Naive thymus-derived CD8-positive, alpha-beta T cell (primary cell): ENCODE measurements at regions of chr5 and their contacts with region 1.

Region 1: DNA sequence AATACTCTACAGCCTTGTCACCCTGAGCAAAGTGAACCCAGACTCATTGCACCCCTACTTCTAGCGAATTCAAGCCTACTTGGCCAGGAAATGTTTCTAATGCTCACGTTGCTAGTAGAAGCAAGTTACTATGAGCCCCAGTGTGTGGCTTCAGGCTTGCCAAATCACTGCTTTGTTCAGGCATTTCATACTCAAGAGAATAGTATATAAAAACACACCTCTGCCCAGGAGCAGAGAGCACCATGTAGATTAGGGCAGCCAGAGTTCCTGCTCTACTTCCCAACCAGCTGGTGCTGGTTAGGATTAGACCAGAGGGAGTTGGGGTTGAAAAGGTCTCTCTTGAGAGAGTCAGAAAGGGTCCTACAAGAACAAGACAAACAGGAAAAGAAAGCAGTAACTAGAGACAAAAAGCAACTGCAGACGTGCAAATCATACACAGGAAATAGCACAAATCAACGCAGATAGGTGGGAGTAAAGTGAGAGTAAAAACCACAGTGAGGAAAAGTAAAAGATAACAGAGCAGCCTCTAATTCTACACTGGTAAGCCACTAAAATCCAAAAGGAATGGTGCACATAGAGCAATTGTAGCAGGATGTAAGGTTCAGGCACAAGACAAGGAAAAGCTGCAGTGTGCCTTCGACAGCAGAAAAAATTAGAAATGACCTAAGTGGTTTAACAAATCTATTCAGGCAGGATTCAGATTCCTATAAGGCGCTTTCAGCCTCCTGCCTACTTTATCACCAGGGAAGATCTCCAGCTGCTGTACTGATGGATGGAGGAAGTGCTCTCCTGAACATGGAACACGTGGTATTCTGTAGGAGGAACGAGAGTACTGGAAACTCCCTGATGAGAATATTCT is 49.6 kb upstream of the KIF2A start:
- DNase-seq: peak in 6 of 10 donors; percentile 7 to 74 (median 48)
- ATAC-seq: peak; percentile 83 to 86
- H3K4me3 Mint-ChIP-seq: peak overlapping the region; percentile 68 to 87 (median 78)
- H3K27ac Mint-ChIP-seq: peak overlapping the region; percentile 86 to 99 (median 97)
- H3K4me1 Mint-ChIP-seq: peaks cover 44 to 77% (median 69%) of the 10 kb centered on the region in 4 donors
- H3K27me3 Mint-ChIP-seq: no peaks in the 10 kb centered on the region

Region 2: GRCh38 chr5:62305715-62306322 is 49.4 kb after region 1 on chr5 and contains the start of gene KIF2A:
- POLR2A ChIA-PET with region 1: interaction called, 12 read pairs
- DNase-seq: peak; percentile 90 to 96 (median 92)
- ATAC-seq: peak; percentile 83 to 84
- H3K4me3 Mint-ChIP-seq: peak within 1 kb of the TSS; percentile 89 to 99 (median 97)
- H3K27ac Mint-ChIP-seq: peak within 1 kb of the TSS; percentile 93 to 99 (median 99)
- H3K4me1 Mint-ChIP-seq: peaks cover 28 to 55% (median 50%) of the 10 kb centered on the region in 4 donors
- H3K27me3 Mint-ChIP-seq: no peaks in the 10 kb centered on the region
- polyA plus RNA-seq, gene KIF2A: 151 to 180 (median 173) TPM

Region 3: DNA sequence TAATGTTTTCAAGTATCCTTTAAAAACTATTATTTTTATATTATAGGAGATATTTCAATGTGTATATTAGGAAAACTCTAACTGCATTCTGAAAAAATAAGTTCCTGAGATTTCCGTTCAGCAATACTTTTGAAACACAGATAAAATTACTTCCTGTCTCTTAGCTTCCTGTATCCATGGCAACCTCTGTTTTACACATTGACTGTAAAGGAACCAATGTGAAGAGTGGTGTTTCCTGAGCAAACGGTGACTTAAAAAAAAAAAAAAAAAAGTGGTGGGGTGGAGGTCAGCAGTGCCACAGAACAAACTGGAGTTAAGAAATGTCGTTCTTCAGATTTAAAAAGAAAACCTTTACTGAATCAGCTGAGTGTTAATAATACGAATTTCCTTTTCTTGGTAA is 322.1 kb after region 1 on chr5 and contains the start of gene LRRC70:
- POLR2A ChIA-PET with region 1: no interaction called
- DNase-seq: peak in 7 of 10 donors; percentile 16 to 87 (median 68)
- ATAC-seq: peak; percentile 99 to 100
- H3K4me3 Mint-ChIP-seq: peak within 1 kb of the TSS; percentile 65 to 87 (median 78)
- H3K27ac Mint-ChIP-seq: peak within 1 kb of the TSS; percentile 77 to 98 (median 91)
- H3K4me1 Mint-ChIP-seq: peaks cover 13 to 43% (median 32%) of the 10 kb centered on the region in 4 donors
- H3K27me3 Mint-ChIP-seq: no peaks in the 10 kb centered on the region
- polyA plus RNA-seq, gene LRRC70: 0.08 to 1.4 (median 0.60) TPM